AG04450 (cell line): ENCODE measurements at regions of chr6 and their contacts with region 1.

Region 1: DNA sequence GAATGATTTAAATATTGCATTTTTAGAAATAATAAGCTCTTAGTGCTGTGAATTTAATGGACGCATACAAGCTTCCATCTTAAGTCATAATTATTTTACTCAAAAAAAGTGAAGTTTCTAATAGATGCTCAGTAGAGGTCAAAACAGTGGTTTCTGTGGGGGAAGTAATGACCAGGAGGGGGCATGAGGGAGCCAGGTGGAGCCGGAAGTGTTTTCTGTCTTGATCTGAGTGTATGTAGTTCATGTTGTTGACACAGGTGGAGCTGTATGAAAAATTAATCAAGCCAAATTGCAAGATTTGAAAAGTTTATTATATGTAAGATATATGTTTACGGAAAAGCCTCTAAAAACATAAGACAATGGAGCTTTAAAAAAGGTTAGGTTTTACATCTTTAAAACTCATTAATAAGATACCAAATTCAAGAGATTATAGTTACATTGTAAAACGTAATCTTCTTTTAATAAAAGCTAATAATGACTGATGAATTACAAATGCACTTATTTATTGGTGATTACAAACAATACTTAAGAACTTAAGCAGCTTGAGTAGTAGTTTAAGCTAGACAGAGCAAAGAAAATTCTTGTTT is 68.0 kb downstream of the PLAGL1 start:
- DNase-seq: no peak
- H3K4me3 ChIP-seq: no peak overlapping the region
- H3K27ac ChIP-seq: no peak overlapping the region
- H3K27me3 ChIP-seq: peaks cover 6% of the 10 kb centered on the region
- CTCF ChIP-seq: peak; percentile 69

Region 2: DNA sequence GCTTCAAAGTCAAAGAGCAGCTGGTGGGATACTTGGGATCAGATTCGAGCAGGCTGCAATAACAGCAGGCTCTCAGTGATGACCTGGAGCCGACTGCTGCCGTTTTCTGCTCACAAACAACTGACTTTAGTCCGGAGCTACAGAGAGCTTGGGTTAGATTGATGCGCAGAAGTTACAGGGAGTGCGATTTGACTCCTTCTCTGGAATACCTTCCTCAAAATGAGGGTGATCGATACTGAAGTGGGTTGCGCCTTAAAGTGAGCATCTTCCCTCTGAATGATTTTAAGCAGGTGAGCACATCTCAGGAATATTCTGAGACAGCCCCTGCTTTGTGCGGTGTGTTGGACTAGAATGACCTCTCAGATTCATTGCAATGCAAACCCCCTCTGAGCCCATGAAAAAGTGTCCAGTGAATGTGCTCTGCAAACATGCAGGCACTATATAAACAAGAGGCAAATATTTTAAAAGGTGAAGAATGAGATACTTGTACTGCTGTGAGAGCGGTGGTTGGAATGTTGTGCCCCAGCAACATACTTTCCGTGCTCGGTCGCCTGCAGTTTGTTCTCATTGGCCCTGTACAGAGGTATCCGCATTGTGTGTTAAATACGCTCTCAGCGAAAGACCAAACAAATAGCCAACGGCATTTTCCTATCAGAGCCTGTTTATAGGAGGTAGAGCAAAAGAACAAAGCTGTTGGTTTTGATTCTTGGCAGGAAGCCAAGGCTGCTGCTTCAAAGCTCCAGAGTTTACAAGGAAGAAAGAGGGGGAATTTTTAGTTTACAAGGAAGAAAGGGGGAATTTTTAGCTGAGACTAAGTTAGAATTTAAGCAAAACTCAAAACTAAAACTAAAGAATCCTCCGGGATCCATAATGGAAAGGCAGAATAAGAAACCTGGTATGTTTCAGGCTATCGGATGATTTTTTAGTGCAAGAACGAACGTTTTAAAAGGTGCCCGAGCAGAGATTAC is 194.7 kb before region 1 on chr6:
- CTCF ChIA-PET with region 1: interaction called, 14 read pairs
- POLR2A ChIA-PET with region 1: no interaction called
- DNase-seq: peak; percentile 61
- H3K4me3 ChIP-seq: peak overlapping the region; percentile 14
- H3K27ac ChIP-seq: peak overlapping the region; percentile 77
- H3K27me3 ChIP-seq: no peaks in the 10 kb centered on the region
- CTCF ChIP-seq: no peak

Region 3: GRCh38 chr6:144013486-144013909 is 73.4 kb after region 1 on chr6:
- CTCF ChIA-PET with region 1: interaction called, 44 read pairs
- POLR2A ChIA-PET with region 1: no interaction called
- DNase-seq: peak; percentile 43
- H3K4me3 ChIP-seq: no peak overlapping the region
- H3K27ac ChIP-seq: no peak overlapping the region
- H3K27me3 ChIP-seq: no peaks in the 10 kb centered on the region
- CTCF ChIP-seq: peak; percentile 95